Endothelial cell of umbilical vein (primary cell): ENCODE measurements at regions of chr1 and their contacts with region 1.

Region 1: GRCh38 chr1:33616773-33617172 is 144.3 kb downstream of the ZSCAN20 start:
- DNase-seq: no peak
- H3K4me3 ChIP-seq: no peak overlapping the region
- H3K27ac ChIP-seq: no peak overlapping the region
- H3K4me1 ChIP-seq: no peaks in the 10 kb centered on the region
- H3K27me3 ChIP-seq: no peaks in the 10 kb centered on the region
- CTCF ChIP-seq: no peak
- POLR2A ChIP-seq: no peak

Region 2: GRCh38 chr1:32861904-32862695 is 754.7 kb before region 1 on chr1:
- CTCF ChIA-PET with region 1: no interaction called
- POLR2A ChIA-PET with region 1: no interaction called
- dilution Hi-C with region 1: no loop called
- intact Hi-C with region 1: no loop called
- DNase-seq: no peak
- H3K4me3 ChIP-seq: no peak overlapping the region
- H3K27ac ChIP-seq: no peak overlapping the region
- H3K4me1 ChIP-seq: peaks cover 9% of the 10 kb centered on the region
- H3K27me3 ChIP-seq: no peaks in the 10 kb centered on the region
- CTCF ChIP-seq: no peak
- POLR2A ChIP-seq: no peak

Region 3: DNA sequence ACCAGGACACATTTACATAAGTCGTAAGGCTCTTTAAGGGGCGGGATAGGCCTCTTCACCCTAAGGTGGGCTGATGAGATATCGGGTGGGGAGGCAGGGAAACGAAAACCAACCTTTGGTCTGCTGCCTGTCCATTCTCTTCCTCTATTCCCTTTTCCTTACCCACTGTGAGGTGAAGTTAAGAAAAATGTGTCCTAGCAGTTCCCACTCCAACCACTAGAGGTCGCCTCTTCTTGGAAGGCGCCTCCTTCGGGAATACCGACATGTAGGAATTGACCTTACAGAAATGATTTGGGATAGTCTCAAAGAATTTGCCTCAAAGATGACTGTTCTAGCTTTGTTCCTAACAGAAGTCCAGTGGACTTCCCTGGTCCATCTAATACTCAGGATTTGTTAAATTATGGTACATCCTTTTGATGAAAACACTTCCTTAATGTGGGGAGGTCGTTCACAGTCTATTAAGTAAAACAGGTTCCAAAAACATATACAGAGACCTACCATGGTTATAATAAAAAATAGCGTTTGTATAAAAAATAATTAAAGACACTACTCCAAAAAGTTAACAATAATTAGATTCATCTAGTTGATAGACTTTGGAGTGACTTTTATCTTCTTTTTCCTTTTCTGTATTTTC is 521.7 kb before region 1 on chr1:
- CTCF ChIA-PET with region 1: interaction called, 16 read pairs
- POLR2A ChIA-PET with region 1: no interaction called
- dilution Hi-C with region 1: no loop called
- intact Hi-C with region 1: loop called (anchors 1 kb)
- DNase-seq: peak; percentile 76
- H3K4me3 ChIP-seq: no peak overlapping the region
- H3K27ac ChIP-seq: no peak overlapping the region
- H3K4me1 ChIP-seq: no peaks in the 10 kb centered on the region
- H3K27me3 ChIP-seq: no peaks in the 10 kb centered on the region
- CTCF ChIP-seq: peak; percentile 89 to 93
- POLR2A ChIP-seq: no peak

Region 4: GRCh38 chr1:33219881-33220661 is 396.7 kb before region 1 on chr1:
- CTCF ChIA-PET with region 1: interaction called, 6 read pairs
- POLR2A ChIA-PET with region 1: no interaction called
- dilution Hi-C with region 1: no loop called
- intact Hi-C with region 1: loop called (anchors 2 kb)
- DNase-seq: no peak
- H3K4me3 ChIP-seq: no peak overlapping the region
- H3K27ac ChIP-seq: no peak overlapping the region
- H3K4me1 ChIP-seq: peaks cover 5% of the 10 kb centered on the region
- H3K27me3 ChIP-seq: peaks cover 3 to 12% of the 10 kb centered on the region in 2 experiments
- CTCF ChIP-seq: no peak
- POLR2A ChIP-seq: no peak

Region 5: DNA sequence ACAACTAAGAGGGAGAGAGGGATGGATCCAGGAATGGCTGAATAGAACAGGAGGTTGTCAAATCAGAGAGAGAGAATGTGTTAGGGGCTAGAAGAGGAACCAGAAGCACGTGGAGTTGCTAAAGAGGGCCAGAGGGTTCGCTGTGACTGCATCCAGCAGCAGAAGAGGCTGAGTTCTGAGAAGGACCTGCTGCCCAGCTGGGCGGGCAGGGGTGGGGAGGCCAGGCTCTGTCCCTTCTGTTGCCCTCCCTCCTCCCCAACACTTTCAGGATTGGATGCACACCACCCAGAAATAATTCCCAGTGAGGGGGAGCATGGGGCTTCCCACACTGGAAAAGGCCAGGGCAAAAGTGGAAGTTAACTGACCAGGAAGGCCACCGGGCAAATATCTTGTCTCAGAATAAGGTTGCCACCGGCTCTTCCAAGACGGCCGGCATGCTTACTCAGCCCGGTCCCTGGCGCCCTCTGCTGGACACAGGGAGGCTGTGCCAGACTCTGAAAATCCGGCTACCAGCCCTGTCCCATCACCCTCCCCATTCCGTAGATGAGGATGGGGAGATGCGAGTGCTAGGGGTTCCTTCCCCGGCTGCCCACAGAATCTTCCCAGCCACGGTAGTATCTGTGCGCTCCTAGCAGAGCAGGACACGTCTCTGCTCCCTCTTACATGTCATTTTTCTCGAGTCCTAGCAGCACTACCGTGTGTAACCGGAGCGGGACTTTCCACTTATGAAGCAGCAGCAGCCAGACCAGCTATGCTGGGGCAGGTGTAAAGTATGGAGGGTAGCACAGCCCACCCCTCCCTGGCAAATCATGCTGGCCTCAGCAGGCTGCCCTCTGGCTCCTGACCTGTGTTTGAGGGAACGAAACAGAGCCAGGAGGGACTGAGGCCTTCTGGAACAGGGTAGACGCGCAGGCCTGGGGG is 249.0 kb before region 1 on chr1:
- CTCF ChIA-PET with region 1: interaction called, 10 read pairs
- POLR2A ChIA-PET with region 1: no interaction called
- dilution Hi-C with region 1: no loop called
- intact Hi-C with region 1: loop called (anchors 2 kb)
- DNase-seq: peak; percentile 67
- H3K4me3 ChIP-seq: no peak overlapping the region
- H3K27ac ChIP-seq: no peak overlapping the region
- H3K4me1 ChIP-seq: no peaks in the 10 kb centered on the region
- H3K27me3 ChIP-seq: no peaks in the 10 kb centered on the region
- CTCF ChIP-seq: peak; percentile 90 to 98
- POLR2A ChIP-seq: no peak

Region 6: GRCh38 chr1:33374336-33375105 is 242.3 kb before region 1 on chr1:
- CTCF ChIA-PET with region 1: interaction called, 10 read pairs
- POLR2A ChIA-PET with region 1: no interaction called
- dilution Hi-C with region 1: no loop called
- intact Hi-C with region 1: loop called (anchors 2 kb)
- DNase-seq: no peak
- H3K4me3 ChIP-seq: no peak overlapping the region
- H3K27ac ChIP-seq: no peak overlapping the region
- H3K4me1 ChIP-seq: no peaks in the 10 kb centered on the region
- H3K27me3 ChIP-seq: no peaks in the 10 kb centered on the region
- CTCF ChIP-seq: no peak
- POLR2A ChIP-seq: no peak

Region 7: GRCh38 chr1:33455539-33456501 is 161.0 kb before region 1 on chr1:
- CTCF ChIA-PET with region 1: no interaction called
- POLR2A ChIA-PET with region 1: no interaction called
- dilution Hi-C with region 1: no loop called
- intact Hi-C with region 1: no loop called
- DNase-seq: peak; percentile 67
- H3K4me3 ChIP-seq: no peak overlapping the region
- H3K27ac ChIP-seq: no peak overlapping the region
- H3K4me1 ChIP-seq: peaks cover 10% of the 10 kb centered on the region
- H3K27me3 ChIP-seq: no peaks in the 10 kb centered on the region
- CTCF ChIP-seq: peak; percentile 68 to 69
- POLR2A ChIP-seq: no peak

Region 8: GRCh38 chr1:33633019-33633801 is 16.4 kb after region 1 on chr1:
- CTCF ChIA-PET with region 1: interaction called, 14 read pairs
- POLR2A ChIA-PET with region 1: no interaction called
- dilution Hi-C with region 1: no loop called
- intact Hi-C with region 1: no loop called
- DNase-seq: peak; percentile 77
- H3K4me3 ChIP-seq: no peak overlapping the region
- H3K27ac ChIP-seq: no peak overlapping the region
- H3K4me1 ChIP-seq: no peaks in the 10 kb centered on the region
- H3K27me3 ChIP-seq: no peaks in the 10 kb centered on the region
- CTCF ChIP-seq: peak; percentile 96 to 99
- POLR2A ChIP-seq: no peak